Transverse colon (tissue), 4 donors: ENCODE measurements at regions of chr16 and their contacts with region 1.

Region 1: DNA sequence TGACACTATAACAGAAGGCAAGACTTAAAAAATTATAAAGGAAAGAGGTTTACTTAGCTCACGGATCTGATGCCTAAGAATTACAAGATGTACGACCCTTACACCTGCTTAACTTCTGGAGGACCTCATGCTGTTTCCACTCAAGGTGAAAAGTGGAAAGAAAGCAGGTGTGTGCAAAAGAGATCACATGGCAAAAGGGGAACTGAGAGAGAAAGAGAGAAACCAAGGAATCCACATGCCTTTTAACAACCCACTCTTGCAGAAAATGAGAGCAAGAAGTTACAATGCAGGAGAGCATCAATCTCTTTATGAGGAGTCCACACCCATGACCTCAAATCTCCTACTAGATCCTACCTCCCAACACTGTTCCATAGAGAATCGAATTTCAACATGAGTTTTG is 2382.2 kb downstream of the TP53TG3F start:
- DNase-seq: no peak
- H3K4me3 ChIP-seq: no peak overlapping the region
- H3K27ac ChIP-seq: no peak overlapping the region
- H3K4me1 ChIP-seq: no peaks in the 10 kb centered on the region
- H3K27me3 ChIP-seq: no peaks in the 10 kb centered on the region
- CTCF ChIP-seq: no peak
- EP300 ChIP-seq: no peak
- POLR2A ChIP-seq: no peak

Region 2: DNA sequence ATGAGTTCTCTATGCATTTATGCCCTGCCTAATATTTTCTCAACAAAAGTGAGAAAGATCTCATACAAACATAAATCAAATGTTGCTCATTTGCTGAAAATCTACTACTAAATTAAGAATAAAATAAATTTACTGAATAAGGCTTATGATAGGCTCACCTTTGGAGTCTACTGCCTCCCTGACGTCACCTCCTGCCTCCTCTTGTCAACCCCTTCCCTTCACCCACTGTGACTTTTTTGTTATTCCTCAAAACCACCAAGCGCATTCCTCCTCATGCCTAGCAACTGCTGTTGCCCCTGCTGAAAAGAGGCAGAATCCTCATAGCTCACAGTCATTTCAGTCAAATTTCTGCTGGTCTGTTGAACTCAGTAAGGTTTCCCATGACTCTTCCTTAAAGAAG is 40.0 kb after region 1 on chr16:
- in situ Hi-C with region 1: loop called in 1 of 4 experiments (anchors 5 kb)
- intact Hi-C with region 1: no loop called
- DNase-seq: no peak
- H3K4me3 ChIP-seq: no peak overlapping the region
- H3K27ac ChIP-seq: no peak overlapping the region
- H3K4me1 ChIP-seq: no peaks in the 10 kb centered on the region
- H3K27me3 ChIP-seq: no peaks in the 10 kb centered on the region
- CTCF ChIP-seq: no peak
- EP300 ChIP-seq: no peak
- POLR2A ChIP-seq: no peak